OCI-LY7 (cell line): ENCODE measurements at regions of chr19 and their contacts with region 1.

Region 1: DNA sequence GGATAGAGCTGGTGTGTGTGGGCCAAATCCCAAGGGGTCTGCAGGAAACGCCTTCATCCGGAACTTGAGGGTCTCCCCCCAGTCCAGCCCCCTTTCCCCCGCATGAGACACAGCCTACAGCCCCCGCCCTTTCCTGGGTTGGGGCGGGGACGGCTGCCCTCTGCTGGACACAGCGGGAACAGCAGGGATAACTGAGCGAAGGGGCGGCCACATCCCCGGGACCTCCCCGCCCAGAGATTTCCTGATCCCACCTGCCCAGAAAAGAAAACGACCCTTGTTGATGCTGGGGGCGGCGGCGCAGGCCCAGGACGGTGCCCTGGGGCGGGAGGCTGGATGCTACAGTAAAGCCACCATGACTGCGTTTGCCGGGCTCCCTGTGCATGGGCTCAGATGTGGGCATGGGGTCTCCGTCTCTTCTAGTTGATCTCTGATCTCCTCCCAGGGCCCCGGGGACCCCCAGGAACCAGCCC is 14.2 kb downstream of the ONECUT3 start:
- DNase-seq: peak; percentile 62
- H3K4me3 ChIP-seq: no peak overlapping the region
- H3K27ac ChIP-seq: no peak overlapping the region
- H3K4me1 ChIP-seq: peaks cover 10% of the 10 kb centered on the region
- CTCF ChIP-seq: peak; percentile 91

Region 2: DNA sequence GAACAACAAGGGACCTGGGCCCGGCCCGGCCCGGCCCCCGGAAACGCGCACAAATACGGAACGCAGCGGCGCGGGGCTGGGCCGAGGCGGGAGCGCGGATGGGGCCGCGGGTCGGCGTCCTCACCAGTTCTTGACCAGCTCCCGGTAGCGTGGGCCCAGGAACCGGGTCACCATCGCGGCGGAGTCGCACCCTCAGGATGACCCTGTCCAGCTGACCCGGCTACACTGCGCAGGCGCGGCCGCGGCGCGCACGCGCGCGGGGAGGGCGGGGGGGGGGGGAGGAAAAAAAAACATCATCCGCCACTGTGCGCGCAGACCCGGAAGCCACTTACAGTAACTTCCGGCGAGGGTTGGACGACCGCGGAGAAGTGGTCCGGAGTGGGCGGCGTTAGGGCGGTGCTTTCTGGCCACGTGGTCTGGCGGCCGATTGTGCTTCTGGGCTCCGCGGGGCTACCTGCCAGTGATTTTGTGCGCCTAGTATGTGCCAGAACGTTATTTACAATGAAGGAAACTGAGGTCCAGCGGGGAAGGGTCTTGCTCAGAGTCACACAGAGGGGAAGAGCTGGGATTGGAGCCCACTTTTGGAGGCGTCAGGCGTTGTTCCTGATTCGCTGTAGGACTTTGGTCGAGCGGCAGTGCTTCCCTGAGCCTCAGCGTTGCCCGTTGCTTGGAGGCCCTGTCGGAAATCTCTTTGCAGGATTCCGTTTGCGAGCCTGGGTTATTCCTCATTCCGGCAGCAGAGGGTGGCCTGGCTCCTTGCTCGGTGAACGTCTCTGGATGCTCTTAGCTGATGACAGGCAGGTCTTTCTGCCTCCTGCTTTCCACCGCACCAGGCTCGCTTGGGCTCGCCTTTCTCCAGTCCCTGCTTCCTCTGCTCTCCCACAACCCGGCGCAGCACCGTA is 162.0 kb before region 1 on chr19 and contains the start of gene UQCR11:
- CTCF ChIA-PET with region 1: no interaction called
- POLR2A ChIA-PET with region 1: no interaction called
- intact Hi-C with region 1: loop called (anchors 1 kb)
- DNase-seq: peak; percentile 97
- H3K4me3 ChIP-seq: peak within 1 kb of the TSS; percentile 100
- H3K27ac ChIP-seq: peak within 1 kb of the TSS; percentile 88
- H3K4me1 ChIP-seq: peaks cover 50% of the 10 kb centered on the region
- CTCF ChIP-seq: peak; percentile 73
- total RNA-seq, gene UQCR11: 85.3 and 86.2 TPM in 2 replicates